Tibial artery (tissue), 4 donors: ENCODE measurements at regions of chr12 and their contacts with region 1.

Region 1: GRCh38 chr12:56127888-56128669 is at the start of gene ESYT1:
- DNase-seq: peak; percentile 100
- H3K4me3 ChIP-seq: peak within 1 kb of the TSS; percentile 74 to 91
- H3K27ac ChIP-seq: peak within 1 kb of the TSS; percentile 95 to 99
- H3K4me1 ChIP-seq: peaks cover 9 to 36% (median 26%) of the 10 kb centered on the region in 4 donors
- H3K27me3 ChIP-seq: no peaks in the 10 kb centered on the region
- CTCF ChIP-seq: no peak

Region 2: GRCh38 chr12:55847603-55848291 is 280.3 kb before region 1 on chr12:
- intact Hi-C with region 1: no loop called
- DNase-seq: peak; percentile 94
- H3K4me3 ChIP-seq: peak overlapping the region; percentile 7 to 26
- H3K27ac ChIP-seq: peak overlapping the region; percentile 84 to 89
- H3K4me1 ChIP-seq: peaks cover 0 to 34% (median 5%) of the 10 kb centered on the region in 4 donors
- H3K27me3 ChIP-seq: no peaks in the 10 kb centered on the region
- CTCF ChIP-seq: no peak

Region 3: GRCh38 chr12:55862286-55862685 is 265.8 kb before region 1 on chr12:
- intact Hi-C with region 1: no loop called
- DNase-seq: no peak
- H3K4me3 ChIP-seq: no peak overlapping the region
- H3K27ac ChIP-seq: no peak overlapping the region
- H3K4me1 ChIP-seq: no peaks in the 10 kb centered on the region
- H3K27me3 ChIP-seq: no peaks in the 10 kb centered on the region
- CTCF ChIP-seq: no peak

Region 4: GRCh38 chr12:56160141-56160763 is 32.2 kb after region 1 on chr12:
- intact Hi-C with region 1: loop called (anchors 5 kb)
- DNase-seq: no peak
- H3K4me3 ChIP-seq: peak overlapping the region; percentile 77 to 93
- H3K27ac ChIP-seq: peak overlapping the region; percentile 95 to 99
- H3K4me1 ChIP-seq: peaks cover 0 to 40% (median 29%) of the 10 kb centered on the region in 4 donors
- H3K27me3 ChIP-seq: no peaks in the 10 kb centered on the region
- CTCF ChIP-seq: no peak

Region 5: GRCh38 chr12:56189176-56189917 is 61.3 kb after region 1 on chr12 and contains the start of gene SMARCC2:
- intact Hi-C with region 1: loop called (anchors 2 kb)
- DNase-seq: peak; percentile 86 to 95
- H3K4me3 ChIP-seq: peak within 1 kb of the TSS; percentile 92 to 95
- H3K27ac ChIP-seq: peak within 1 kb of the TSS; percentile 94 to 99
- H3K4me1 ChIP-seq: peaks cover 0 to 28% (median 23%) of the 10 kb centered on the region in 4 donors
- H3K27me3 ChIP-seq: no peaks in the 10 kb centered on the region
- CTCF ChIP-seq: peak; percentile 60 to 94

Region 6: GRCh38 chr12:56261503-56262230 is 133.6 kb after region 1 on chr12:
- intact Hi-C with region 1: loop called (anchors 5 kb)
- DNase-seq: no peak
- H3K4me3 ChIP-seq: no peak overlapping the region
- H3K27ac ChIP-seq: no peak overlapping the region
- H3K4me1 ChIP-seq: peaks cover 0 to 27% (median 20%) of the 10 kb centered on the region in 4 donors
- H3K27me3 ChIP-seq: no peaks in the 10 kb centered on the region
- CTCF ChIP-seq: no peak